ENCODE measurements at regions of chr9 and their contacts with region 1.

Region 1: DNA sequence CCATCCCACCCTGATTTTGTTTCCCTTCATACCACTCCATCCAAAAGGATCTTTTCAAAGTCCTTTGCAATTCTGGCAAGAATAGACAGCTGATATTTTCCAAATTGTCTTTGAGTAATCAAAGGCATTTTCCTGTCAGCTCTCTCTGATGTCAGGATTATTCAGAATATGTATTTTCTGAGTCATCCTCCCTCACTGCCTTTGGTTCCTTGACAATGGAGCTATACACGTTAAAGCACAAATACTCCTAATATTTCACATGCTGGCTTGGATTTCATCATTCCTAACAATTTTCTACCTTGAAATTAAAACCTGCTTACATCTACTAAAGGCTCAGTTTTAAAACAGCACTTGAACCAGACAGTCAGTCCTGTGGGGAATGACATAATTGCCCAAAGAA is 379.4 kb downstream of the GADD45G start:
- DNase-seq: no peak
- H3K4me3 Mint-ChIP-seq: peak overlapping the region; percentile 53
- H3K27ac Mint-ChIP-seq: peak overlapping the region; percentile 95
- H3K4me1 Mint-ChIP-seq: peaks cover 60% of the 10 kb centered on the region
- H3K27me3 Mint-ChIP-seq: peaks cover 20% of the 10 kb centered on the region

Region 2: GRCh38 chr9:89701221-89701798 is 282.9 kb before region 1 on chr9:
- intact Hi-C with region 1: loop called (anchors 5 kb)
- DNase-seq: peak; percentile 62
- H3K4me3 Mint-ChIP-seq: peak overlapping the region; percentile 90
- H3K27ac Mint-ChIP-seq: peak overlapping the region; percentile 91
- H3K4me1 Mint-ChIP-seq: peaks cover 64% of the 10 kb centered on the region
- H3K27me3 Mint-ChIP-seq: no peaks in the 10 kb centered on the region

Region 3: DNA sequence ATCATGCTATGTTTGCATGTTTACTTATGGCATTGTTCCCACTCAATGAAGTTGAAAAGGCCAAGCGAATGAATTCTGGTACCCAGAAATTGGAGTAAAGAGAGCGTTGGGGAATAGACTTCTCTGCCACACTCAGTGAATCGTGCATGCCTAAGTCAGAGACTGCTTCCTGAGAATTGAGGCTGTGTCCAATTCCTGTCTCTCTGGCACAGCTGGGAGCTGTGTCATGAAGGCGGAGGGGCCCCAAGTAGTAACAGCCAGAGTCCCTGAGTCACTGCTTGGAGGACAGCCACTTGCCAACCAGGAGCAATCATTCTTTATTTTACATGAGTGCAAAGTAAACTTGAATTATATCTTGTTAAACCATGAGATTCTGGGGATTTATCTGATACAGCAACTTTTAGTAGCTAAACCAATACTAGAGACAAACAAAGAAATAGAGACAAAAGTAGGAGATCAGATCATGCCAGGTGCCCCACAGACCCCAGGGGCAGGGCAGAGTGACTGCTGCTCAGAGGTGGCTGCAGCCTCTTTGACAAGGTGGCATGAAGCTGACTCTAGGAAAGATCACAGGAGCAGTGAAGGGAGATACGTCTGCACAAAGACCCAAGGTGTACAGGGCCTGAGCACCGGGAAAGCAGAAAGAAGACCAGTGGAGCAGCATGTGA is 133.5 kb before region 1 on chr9:
- intact Hi-C with region 1: no loop called
- DNase-seq: peak; percentile 6
- H3K4me3 Mint-ChIP-seq: no peak overlapping the region
- H3K27ac Mint-ChIP-seq: no peak overlapping the region
- H3K4me1 Mint-ChIP-seq: no peaks in the 10 kb centered on the region
- H3K27me3 Mint-ChIP-seq: peaks cover 10% of the 10 kb centered on the region

Region 4: GRCh38 chr9:89919169-89919681 is 65.0 kb before region 1 on chr9:
- intact Hi-C with region 1: loop called (anchors 1 kb)
- DNase-seq: peak; percentile 31
- H3K4me3 Mint-ChIP-seq: peak overlapping the region; percentile 46
- H3K27ac Mint-ChIP-seq: peak overlapping the region; percentile 68
- H3K4me1 Mint-ChIP-seq: peaks cover 54% of the 10 kb centered on the region
- H3K27me3 Mint-ChIP-seq: peaks cover 1% of the 10 kb centered on the region

Region 5: GRCh38 chr9:89969156-89969675 is 15.0 kb before region 1 on chr9:
- intact Hi-C with region 1: loop called (anchors 1 kb)
- DNase-seq: no peak
- H3K4me3 Mint-ChIP-seq: no peak overlapping the region
- H3K27ac Mint-ChIP-seq: peak overlapping the region; percentile 59
- H3K4me1 Mint-ChIP-seq: peaks cover 35% of the 10 kb centered on the region
- H3K27me3 Mint-ChIP-seq: peaks cover 7% of the 10 kb centered on the region

Measured in activated T-helper 2 cell treated with anti-CD3 and anti-CD28 coated beads, Interferon-gamma antibody, Interleukin-2, Interleukin-4, amounts not matched to agents 10 μg/mL and 5 μg/mL and 100 μg/mL, durations not matched to agents 14 hours and 24 hours and 36 hours (primary cell).